ENCODE measurements at regions of chr6 and their contacts with region 1.

Region 1: DNA sequence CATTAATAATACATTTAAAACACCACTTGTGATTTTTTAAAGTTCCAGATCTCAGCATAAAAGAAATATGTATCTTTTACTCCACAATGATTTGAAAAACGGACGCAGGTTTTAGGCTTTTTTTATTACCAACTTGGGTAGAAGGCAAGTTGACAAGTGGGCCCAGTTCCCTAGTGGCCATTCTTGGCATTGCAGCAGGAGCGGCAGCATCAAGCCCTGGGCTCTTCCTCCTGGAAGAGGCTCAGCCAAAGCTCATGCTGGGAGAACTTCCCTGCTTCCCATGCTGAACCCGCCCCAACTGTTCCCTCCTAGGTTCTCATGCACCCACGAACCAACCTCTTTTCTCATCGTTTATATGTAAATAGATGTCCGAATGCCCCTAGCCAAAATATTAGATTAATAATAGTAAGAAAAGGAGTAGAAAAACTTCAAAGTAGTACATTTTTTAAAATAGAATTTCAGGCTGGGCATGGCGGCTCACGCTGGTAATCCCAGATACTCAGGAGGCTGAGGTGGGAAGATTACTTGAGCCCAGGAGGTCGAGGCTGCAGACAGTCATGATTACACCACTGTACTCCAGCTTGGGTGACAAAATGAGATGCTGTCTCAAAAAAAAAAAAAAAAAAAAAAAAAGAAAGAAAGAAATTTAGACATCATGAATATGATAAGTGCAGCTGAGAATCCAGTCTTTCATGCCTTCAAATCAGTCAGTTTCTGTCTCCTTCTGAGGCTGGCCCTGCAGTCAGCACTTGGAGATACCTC is 18.2 kb upstream of the MYB start:
- DNase-seq: peak; percentile 56
- H3K4me3 Mint-ChIP-seq: no peak overlapping the region
- H3K27ac Mint-ChIP-seq: peak overlapping the region; percentile 77
- H3K4me1 Mint-ChIP-seq: peaks cover 58% of the 10 kb centered on the region
- H3K27me3 Mint-ChIP-seq: no peaks in the 10 kb centered on the region

Region 2: DNA sequence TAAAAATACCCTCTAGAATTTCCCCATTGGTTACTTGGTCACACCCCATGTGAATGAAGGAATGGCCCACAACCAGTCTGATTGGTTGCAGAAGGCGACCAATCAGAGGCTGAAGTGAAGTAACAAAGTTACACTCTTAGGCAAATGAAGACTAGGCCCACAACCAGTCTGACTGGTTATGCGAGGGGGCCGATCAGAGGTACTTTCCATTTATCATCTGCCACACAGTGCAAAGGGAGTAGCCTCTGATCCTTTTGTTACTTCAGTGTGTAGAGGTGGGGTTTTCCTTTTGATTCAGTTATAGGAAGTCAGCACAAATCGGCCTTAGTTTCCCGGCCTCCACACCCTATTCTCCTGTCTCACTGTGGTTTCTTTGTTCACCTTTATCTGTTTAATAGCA is 783.8 kb before region 1 on chr6:
- CTCF ChIA-PET with region 1: no interaction called
- intact Hi-C with region 1: loop called (anchors 1 kb)
- DNase-seq: peak; percentile 87
- H3K4me3 Mint-ChIP-seq: peak overlapping the region; percentile 35
- H3K27ac Mint-ChIP-seq: peak overlapping the region; percentile 84
- H3K4me1 Mint-ChIP-seq: peaks cover 40% of the 10 kb centered on the region
- H3K27me3 Mint-ChIP-seq: no peaks in the 10 kb centered on the region

Region 3: DNA sequence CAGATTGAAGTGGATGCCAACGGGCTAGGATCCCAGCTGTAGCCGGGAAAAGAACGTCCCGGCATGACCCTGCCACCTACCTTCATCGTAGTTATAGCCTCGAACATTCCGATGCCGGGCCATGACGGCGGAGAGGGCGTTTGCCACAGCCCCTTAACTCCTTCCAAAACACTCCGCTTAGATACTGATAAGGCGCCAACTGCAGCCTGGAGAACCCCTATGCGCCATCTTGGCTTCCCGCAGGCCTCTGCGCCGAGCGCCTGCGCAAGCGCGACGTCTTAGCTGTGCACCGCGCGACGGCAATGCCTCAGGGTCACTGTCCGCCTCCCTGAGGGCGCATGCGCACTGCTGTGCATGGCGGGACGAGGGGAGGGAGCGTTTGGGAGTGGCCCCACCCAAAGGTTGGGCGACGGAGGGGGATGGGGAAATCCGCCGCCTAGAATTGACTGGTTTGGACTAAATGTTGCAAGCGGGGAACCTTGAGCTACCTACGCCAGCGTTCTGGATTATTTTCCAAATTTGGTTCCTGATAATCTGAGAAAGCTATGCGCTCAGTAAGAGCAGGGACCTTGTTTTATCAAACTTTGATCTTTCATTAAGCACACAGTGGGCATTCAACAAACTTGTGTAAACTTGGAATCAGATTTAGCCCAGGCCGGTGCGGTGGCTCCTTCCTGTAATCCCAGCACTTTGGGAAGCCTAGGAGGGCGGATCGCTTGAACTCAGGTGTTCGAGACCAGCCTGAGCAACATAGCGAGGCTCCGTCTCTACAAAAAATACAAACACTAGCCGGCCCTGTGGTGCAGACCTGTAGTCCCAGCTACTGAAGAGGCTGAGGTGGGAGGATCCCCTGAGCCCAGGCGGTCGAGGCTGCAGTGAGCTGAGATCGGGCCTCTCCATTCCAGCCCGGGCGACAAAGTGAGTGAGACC is 108.0 kb before region 1 on chr6 and contains the start of gene HBS1L:
- CTCF ChIA-PET with region 1: interaction called, 3 read pairs
- intact Hi-C with region 1: loop called (anchors 1 kb)
- DNase-seq: peak; percentile 98
- H3K4me3 Mint-ChIP-seq: peak within 1 kb of the TSS; percentile 90
- H3K27ac Mint-ChIP-seq: peak within 1 kb of the TSS; percentile 96
- H3K4me1 Mint-ChIP-seq: peaks cover 23% of the 10 kb centered on the region
- H3K27me3 Mint-ChIP-seq: no peaks in the 10 kb centered on the region
- total RNA-seq, gene HBS1L: 150 to 153 TPM

Region 4: DNA sequence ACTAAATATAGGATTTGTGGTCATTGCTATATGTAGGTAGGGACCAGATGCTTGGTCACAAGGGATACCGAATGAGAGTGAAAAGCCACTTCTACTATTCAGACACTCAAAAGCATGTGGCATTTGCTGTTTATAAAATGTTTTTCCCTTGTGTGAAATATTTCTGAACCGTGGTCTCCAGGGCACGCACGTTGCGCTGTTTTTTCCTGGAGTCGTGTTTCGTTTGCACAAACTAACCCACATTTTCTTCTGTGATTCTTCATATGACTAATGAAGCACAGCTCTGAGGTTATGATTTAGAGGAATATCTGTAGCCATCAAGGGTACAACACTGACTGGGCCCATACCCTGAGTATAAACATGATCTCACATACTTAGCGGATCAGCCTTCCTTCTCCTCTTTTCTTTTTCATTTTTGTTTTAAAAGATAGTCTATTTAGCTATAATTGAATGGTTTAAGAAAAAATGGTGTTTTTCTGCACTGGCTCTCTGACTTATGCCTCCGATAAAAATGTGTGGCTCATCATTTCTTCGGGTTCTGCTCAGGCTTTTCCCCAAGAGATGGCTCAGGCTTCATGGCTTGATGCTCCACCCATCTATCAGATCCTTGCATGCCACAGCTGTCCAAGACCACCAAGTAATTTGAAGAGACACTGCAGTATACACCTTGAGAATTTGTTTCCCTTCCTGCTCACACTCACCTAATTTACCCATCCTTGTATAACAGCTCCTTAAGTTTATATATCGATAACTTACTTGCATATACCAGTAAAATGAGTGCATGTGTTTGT is 48.3 kb before region 1 on chr6:
- CTCF ChIA-PET with region 1: interaction called, 6 read pairs
- intact Hi-C with region 1: loop called (anchors 1 kb)
- DNase-seq: peak; percentile 75
- H3K4me3 Mint-ChIP-seq: no peak overlapping the region
- H3K27ac Mint-ChIP-seq: peak overlapping the region; percentile 74
- H3K4me1 Mint-ChIP-seq: peaks cover 72% of the 10 kb centered on the region
- H3K27me3 Mint-ChIP-seq: no peaks in the 10 kb centered on the region

Region 5: DNA sequence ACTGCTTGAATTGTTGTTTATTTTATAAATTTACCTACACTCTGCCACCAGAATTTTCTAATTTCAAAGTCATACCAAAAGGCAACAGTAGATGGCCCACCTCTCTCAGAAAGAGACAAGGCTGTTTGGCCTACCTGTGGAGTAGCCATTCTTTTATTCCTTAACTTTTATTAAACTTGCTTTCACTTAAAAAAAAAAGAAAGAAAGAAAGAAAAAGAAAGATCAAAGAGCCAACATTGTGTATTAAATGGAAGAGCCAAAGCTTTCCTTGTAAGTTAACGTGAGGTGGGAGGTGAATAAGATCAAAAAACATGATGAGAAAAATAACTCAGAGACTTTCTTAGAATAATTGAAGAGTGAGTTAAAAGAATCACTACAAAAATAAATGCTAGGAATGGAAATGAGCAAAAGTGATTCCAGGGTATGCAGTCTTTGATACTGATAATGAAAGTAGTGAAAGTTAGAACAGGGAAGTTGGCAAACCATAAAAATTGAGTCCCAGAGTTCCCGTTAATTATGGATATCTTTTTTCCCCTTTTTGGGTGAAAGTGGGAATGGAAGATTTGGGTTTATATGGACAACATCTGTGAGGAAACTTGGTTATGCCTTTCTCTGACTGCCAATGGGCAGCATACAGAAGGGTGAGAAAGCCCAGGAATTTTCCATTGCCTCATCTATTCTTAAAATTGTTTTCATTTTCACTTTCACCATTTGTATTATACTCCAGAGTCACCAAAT is 17.6 kb before region 1 on chr6:
- CTCF ChIA-PET with region 1: interaction called, 13 read pairs
- intact Hi-C with region 1: loop called (anchors 1 kb)
- DNase-seq: no peak
- H3K4me3 Mint-ChIP-seq: no peak overlapping the region
- H3K27ac Mint-ChIP-seq: peak overlapping the region; percentile 76
- H3K4me1 Mint-ChIP-seq: peaks cover 51% of the 10 kb centered on the region
- H3K27me3 Mint-ChIP-seq: no peaks in the 10 kb centered on the region

Region 6: DNA sequence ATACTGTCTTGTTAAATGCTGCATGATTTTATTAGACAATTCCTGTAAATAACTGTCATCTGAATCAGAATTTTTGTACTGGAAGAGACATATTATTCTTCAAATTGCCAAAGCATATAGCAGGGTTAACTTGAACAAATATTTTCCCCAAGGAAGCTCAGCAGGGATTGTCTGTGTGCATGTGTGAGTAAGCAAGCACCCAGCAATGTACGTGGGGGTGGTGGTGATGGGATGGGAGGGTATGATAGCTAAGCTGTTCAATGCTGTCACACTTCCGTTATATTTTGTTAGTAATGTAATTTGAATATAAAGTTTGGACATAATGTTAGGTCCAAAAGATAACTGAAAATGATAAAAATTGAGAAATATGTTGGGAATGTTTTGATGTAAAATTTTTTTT is 136.4 kb after region 1 on chr6:
- CTCF ChIA-PET with region 1: no interaction called
- intact Hi-C with region 1: no loop called
- DNase-seq: no peak
- H3K4me3 Mint-ChIP-seq: no peak overlapping the region
- H3K27ac Mint-ChIP-seq: no peak overlapping the region
- H3K4me1 Mint-ChIP-seq: peaks cover 13% of the 10 kb centered on the region
- H3K27me3 Mint-ChIP-seq: no peaks in the 10 kb centered on the region

Region 7: DNA sequence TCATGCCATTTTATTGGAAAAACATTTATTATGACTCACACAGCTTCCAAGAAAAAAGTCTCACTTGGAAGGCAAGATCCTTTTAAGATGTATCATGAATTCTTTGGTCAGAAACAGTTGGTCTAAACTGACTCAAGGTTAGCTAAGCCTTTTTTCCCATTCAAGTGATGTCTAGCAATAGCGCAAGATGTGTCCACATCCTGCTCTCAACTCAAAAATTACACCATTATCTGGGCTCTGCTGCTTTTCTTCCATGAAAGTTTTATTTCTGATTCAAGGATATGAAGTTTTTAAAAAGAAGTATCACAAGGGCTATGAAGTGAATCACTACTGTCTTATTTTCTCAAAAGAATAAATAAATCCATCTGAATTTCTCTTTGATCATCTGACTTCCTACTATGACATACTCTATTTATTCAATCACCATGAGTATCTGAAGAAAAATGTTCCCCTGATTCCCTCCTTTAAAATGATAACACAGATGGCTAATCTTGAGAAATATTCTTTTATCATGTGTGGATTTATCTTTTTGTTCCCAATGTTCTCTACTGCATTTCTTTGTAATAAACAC is 195.5 kb after region 1 on chr6:
- CTCF ChIA-PET with region 1: no interaction called
- intact Hi-C with region 1: no loop called
- DNase-seq: no peak
- H3K4me3 Mint-ChIP-seq: no peak overlapping the region
- H3K27ac Mint-ChIP-seq: no peak overlapping the region
- H3K4me1 Mint-ChIP-seq: peaks cover 4% of the 10 kb centered on the region
- H3K27me3 Mint-ChIP-seq: no peaks in the 10 kb centered on the region

Region 8: GRCh38 chr6:135497412-135498269 is 334.8 kb after region 1 on chr6 and contains the start of gene AHI1:
- CTCF ChIA-PET with region 1: no interaction called
- intact Hi-C with region 1: loop called (anchors 5 kb)
- DNase-seq: peak; percentile 85
- H3K4me3 Mint-ChIP-seq: no peak within 1 kb of the TSS
- H3K27ac Mint-ChIP-seq: no peak within 1 kb of the TSS
- H3K4me1 Mint-ChIP-seq: peaks cover 16% of the 10 kb centered on the region
- H3K27me3 Mint-ChIP-seq: no peaks in the 10 kb centered on the region
- total RNA-seq, gene AHI1: 17.8 to 18.8 TPM

Measured in activated naive CD4-positive, alpha-beta T cell treated with anti-CD3 and anti-CD28 coated beads for 36 hours (primary cell).